Activated T-helper 1 cell treated with anti-CD3 and anti-CD28 coated beads, Interleukin-12 subunit alpha, Interleukin-12 subunit beta, Interleukin-2, Interleukin-4 antibody, amounts not matched to agents 30 ng/mL and 10 ng/mL and 1 ng/mL, durations not matched to agents 14 hours and 24 hours and 36 hours (primary cell): ENCODE measurements at regions of chr4 and their contacts with region 1.

Region 1: DNA sequence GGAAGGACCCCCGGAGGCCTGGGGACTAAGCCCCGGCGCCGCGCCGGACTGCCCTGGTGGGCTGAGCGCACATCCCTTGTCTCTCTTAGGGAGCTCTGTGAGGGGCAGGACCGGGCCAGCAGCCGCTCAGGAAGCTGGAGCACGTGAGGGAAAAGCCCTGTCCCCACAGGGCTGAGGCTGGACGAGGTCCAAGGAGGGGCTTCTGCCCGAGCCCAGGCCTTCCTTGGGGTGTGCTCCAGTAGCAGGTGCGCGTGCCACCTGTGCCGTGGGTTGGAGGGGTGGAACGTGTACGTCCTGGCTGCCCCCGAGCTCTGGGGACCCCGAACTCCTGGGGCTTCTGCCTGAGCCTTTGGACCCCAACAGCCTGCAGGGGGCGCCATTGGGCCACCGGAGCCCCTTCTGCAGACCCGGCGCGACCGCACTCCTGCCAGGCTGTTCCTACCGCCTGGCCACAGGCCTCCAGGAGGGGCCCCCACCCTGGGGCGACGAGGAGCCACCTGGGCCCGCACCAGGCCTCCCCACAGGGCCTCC is 27.2 kb downstream of the TACC3 start:
- DNase-seq: peak; percentile 71
- H3K4me3 Mint-ChIP-seq: no peak overlapping the region
- H3K27ac Mint-ChIP-seq: no peak overlapping the region
- H3K4me1 Mint-ChIP-seq: no peaks in the 10 kb centered on the region
- H3K27me3 Mint-ChIP-seq: no peaks in the 10 kb centered on the region

Region 2: GRCh38 chr4:1809754-1810511 is 61.4 kb after region 1 on chr4:
- intact Hi-C with region 1: loop called (anchors 1 kb)
- DNase-seq: peak; percentile 57
- H3K4me3 Mint-ChIP-seq: no peak overlapping the region
- H3K27ac Mint-ChIP-seq: no peak overlapping the region
- H3K4me1 Mint-ChIP-seq: no peaks in the 10 kb centered on the region
- H3K27me3 Mint-ChIP-seq: no peaks in the 10 kb centered on the region

Region 3: GRCh38 chr4:1899149-1900086 is 150.9 kb after region 1 on chr4:
- intact Hi-C with region 1: loop called (anchors 2 kb)
- DNase-seq: peak; percentile 69
- H3K4me3 Mint-ChIP-seq: no peak overlapping the region
- H3K27ac Mint-ChIP-seq: peak overlapping the region; percentile 87
- H3K4me1 Mint-ChIP-seq: peaks cover 56% of the 10 kb centered on the region
- H3K27me3 Mint-ChIP-seq: no peaks in the 10 kb centered on the region

Region 4: DNA sequence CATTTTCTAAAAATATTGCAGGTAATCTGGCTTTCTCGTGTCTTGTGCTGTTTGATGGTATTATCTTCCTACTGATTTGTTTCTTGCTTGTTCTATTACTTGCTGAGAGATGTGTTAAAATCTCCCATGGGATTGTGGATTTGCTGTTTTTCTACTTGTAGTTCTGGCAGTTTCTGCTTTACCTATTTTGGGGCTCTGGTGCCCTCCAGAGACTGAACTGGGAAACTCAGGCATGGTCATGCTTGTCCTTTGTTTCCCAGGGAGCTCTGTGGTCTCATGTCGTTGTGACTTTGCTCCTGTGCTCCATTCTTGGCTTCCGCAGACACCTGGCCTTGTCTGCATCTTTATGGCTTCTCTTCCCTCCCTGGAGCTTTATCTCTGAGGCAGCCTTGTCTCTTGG is 162.1 kb after region 1 on chr4:
- intact Hi-C with region 1: loop called (anchors 1 kb)
- DNase-seq: no peak
- H3K4me3 Mint-ChIP-seq: no peak overlapping the region
- H3K27ac Mint-ChIP-seq: peak overlapping the region; percentile 84
- H3K4me1 Mint-ChIP-seq: peaks cover 47% of the 10 kb centered on the region
- H3K27me3 Mint-ChIP-seq: no peaks in the 10 kb centered on the region